ENCODE measurements at regions of chr11 and their contacts with region 1.

Region 1: GRCh38 chr11:62922658-62923431 is 1.7 kb upstream of the CHRM1 start:
- DNase-seq: no peak
- H3K4me3 ChIP-seq: no peak overlapping the region
- H3K27ac ChIP-seq: no peak overlapping the region
- H3K4me1 ChIP-seq: peaks cover 16% of the 10 kb centered on the region
- H3K27me3 ChIP-seq: peaks cover 36% of the 10 kb centered on the region
- CTCF ChIP-seq: peak; percentile 20 to 40

Region 2: GRCh38 chr11:62458212-62459002 is 464.4 kb before region 1 on chr11:
- CTCF ChIA-PET with region 1: interaction called, 17 read pairs
- dilution Hi-C with region 1: no loop called
- in situ Hi-C with region 1: no loop called
- intact Hi-C with region 1: no loop called
- DNase-seq: no peak
- H3K4me3 ChIP-seq: no peak overlapping the region
- H3K27ac ChIP-seq: no peak overlapping the region
- H3K4me1 ChIP-seq: no peaks in the 10 kb centered on the region
- H3K27me3 ChIP-seq: no peaks in the 10 kb centered on the region
- CTCF ChIP-seq: no peak

Region 3: GRCh38 chr11:62806611-62807121 is 116.2 kb before region 1 on chr11:
- CTCF ChIA-PET with region 1: no interaction called
- dilution Hi-C with region 1: no loop called
- in situ Hi-C with region 1: no loop called
- intact Hi-C with region 1: no loop called
- DNase-seq: peak; percentile 55
- H3K4me3 ChIP-seq: no peak overlapping the region
- H3K27ac ChIP-seq: peak overlapping the region; percentile 77
- H3K4me1 ChIP-seq: peaks cover 12% of the 10 kb centered on the region
- H3K27me3 ChIP-seq: no peaks in the 10 kb centered on the region
- CTCF ChIP-seq: no peak

Region 4: GRCh38 chr11:62880803-62881578 is 41.9 kb before region 1 on chr11 and contains the start of gene SLC3A2:
- CTCF ChIA-PET with region 1: no interaction called
- dilution Hi-C with region 1: no loop called
- in situ Hi-C with region 1: no loop called
- intact Hi-C with region 1: loop called (anchors 1 kb)
- DNase-seq: peak; percentile 88
- H3K4me3 ChIP-seq: peak within 1 kb of the TSS; percentile 90 to 96 (median 91)
- H3K27ac ChIP-seq: peak within 1 kb of the TSS; percentile 99
- H3K4me1 ChIP-seq: peaks cover 41% of the 10 kb centered on the region
- H3K27me3 ChIP-seq: no peaks in the 10 kb centered on the region
- CTCF ChIP-seq: peak; percentile 32 to 72
- total RNA-seq, gene SLC3A2: 1,418 to 1,465 TPM

Region 5: GRCh38 chr11:63012430-63012829 is 89.6 kb after region 1 on chr11:
- CTCF ChIA-PET with region 1: no interaction called
- dilution Hi-C with region 1: loop called (anchors 5 kb)
- in situ Hi-C with region 1: no loop called
- intact Hi-C with region 1: no loop called
- DNase-seq: no peak
- H3K4me3 ChIP-seq: no peak overlapping the region
- H3K27ac ChIP-seq: no peak overlapping the region
- H3K4me1 ChIP-seq: no peaks in the 10 kb centered on the region
- H3K27me3 ChIP-seq: no peaks in the 10 kb centered on the region
- CTCF ChIP-seq: no peak

Region 6: DNA sequence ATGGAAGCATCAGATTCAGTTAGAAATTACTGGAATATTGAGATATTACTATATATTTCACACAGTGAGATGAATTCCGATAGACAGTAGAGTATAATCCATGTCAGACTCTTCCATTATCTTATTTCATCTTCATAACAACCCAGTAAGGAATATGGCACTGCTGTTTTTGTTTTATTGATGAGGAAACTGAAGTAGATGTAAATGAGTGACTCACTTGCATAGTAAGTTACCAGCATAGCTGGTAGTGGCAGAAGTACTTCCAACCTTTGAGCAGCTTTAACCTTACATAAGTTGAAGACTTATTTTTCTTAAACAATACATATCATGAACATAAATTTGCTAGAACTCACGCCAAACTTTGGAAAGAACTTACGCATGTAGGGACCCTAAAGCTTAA is 375.4 kb after region 1 on chr11:
- CTCF ChIA-PET with region 1: no interaction called
- dilution Hi-C with region 1: no loop called
- in situ Hi-C with region 1: no loop called
- intact Hi-C with region 1: no loop called
- DNase-seq: no peak
- H3K4me3 ChIP-seq: no peak overlapping the region
- H3K27ac ChIP-seq: no peak overlapping the region
- H3K4me1 ChIP-seq: no peaks in the 10 kb centered on the region
- H3K27me3 ChIP-seq: no peaks in the 10 kb centered on the region
- CTCF ChIP-seq: no peak